Sigmoid colon (tissue), 7 donors: ENCODE measurements at regions of chr7 and their contacts with region 1.

Region 1: GRCh38 chr7:92447345-92448204 is at the start of gene GATAD1:
- DNase-seq: peak; percentile 96
- H3K4me3 ChIP-seq: peak within 1 kb of the TSS; percentile 93 to 97 (median 94)
- H3K27ac ChIP-seq: peak within 1 kb of the TSS; percentile 93 to 99 (median 97)
- H3K4me1 ChIP-seq: peaks cover 0 to 11% (median 8%) of the 10 kb centered on the region in 4 donors
- H3K27me3 ChIP-seq: no peaks in the 10 kb centered on the region
- CTCF ChIP-seq: peak in 3 of 4 experiments; percentile 84 to 96 (median 92)
- EP300 ChIP-seq: no peak
- POLR2A ChIP-seq: peak; percentile 75 to 76
- total RNA-seq, gene GATAD1: 26.5 to 57.1 (median 47.7) TPM

Region 2: DNA sequence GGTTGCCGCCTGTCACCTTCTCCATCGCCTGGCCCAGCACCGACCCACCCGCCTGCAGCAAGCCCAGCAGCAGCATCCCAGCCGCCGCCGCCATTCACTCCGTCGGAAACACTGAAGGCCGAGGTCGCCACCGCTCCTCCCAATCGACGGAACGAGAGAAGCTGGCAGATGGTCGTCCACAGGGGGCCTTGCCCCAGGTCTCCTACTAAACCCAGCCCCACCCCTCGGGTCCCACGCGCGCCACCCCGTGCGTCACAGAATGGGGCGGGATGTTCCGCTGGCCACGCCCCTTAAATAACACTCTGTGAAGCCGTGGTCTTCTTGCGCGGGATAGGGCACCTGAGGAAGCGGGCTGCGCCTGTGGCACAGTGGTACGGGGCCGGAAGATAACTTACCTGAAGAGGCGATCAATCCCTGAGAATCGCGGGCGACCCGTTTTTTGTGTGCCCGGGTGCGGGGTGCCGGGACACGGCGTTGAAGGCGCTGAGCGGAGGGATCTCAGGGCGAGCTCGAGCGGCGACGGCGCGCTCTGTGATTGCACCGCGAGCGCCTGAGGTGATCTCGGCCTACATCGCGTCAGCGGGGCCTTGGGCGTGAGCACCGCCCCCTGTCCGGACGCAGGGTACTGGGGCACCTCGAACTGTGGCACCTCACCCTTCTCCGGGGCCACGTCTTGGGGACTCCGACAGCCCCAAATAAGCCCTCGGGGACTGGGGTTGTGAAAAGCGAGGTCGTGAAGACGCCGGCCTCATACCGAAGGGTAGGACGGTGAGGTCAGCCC is 313.1 kb before region 1 on chr7 and contains the start of gene CYP51A1:
- intact Hi-C with region 1: loop called (anchors 5 kb)
- DNase-seq: peak; percentile 97
- H3K4me3 ChIP-seq: peak within 1 kb of the TSS; percentile 78 to 91 (median 84)
- H3K27ac ChIP-seq: peak within 1 kb of the TSS; percentile 87 to 95 (median 92)
- H3K4me1 ChIP-seq: peaks cover 0 to 21% (median 10%) of the 10 kb centered on the region in 4 donors
- H3K27me3 ChIP-seq: no peaks in the 10 kb centered on the region
- CTCF ChIP-seq: no peak
- EP300 ChIP-seq: peak in 2 of 4 donors; percentile 49 to 63
- POLR2A ChIP-seq: peak; percentile 93
- total RNA-seq, gene CYP51A1: 17.7 to 27.8 (median 25.1) TPM

Region 3: GRCh38 chr7:92178927-92179924 is 268.3 kb before region 1 on chr7 and contains the start of gene LRRD1:
- intact Hi-C with region 1: loop called (anchors 5 kb)
- DNase-seq: peak; percentile 90
- H3K4me3 ChIP-seq: peak within 1 kb of the TSS; percentile 37 to 60 (median 52)
- H3K27ac ChIP-seq: peak within 1 kb of the TSS; percentile 80 to 83 (median 80)
- H3K4me1 ChIP-seq: peaks cover 0 to 8% (median 4%) of the 10 kb centered on the region in 4 donors
- H3K27me3 ChIP-seq: no peaks in the 10 kb centered on the region
- CTCF ChIP-seq: peak; percentile 59 to 98 (median 90)
- EP300 ChIP-seq: no peak
- POLR2A ChIP-seq: no peak
- total RNA-seq, gene LRRD1: under 0.01 to 0.83 TPM in 2 of 4 donors, not detected in the others

Region 4: GRCh38 chr7:92245487-92246362 is 201.8 kb before region 1 on chr7 and contains the starts of genes ANKIB1 and KRIT1:
- intact Hi-C with region 1: loop called (anchors 2 kb)
- DNase-seq: peak; percentile 93
- H3K4me3 ChIP-seq: peak within 1 kb of the TSS; percentile 71 to 99 (median 95)
- H3K27ac ChIP-seq: peak within 1 kb of the TSS; percentile 81 to 95 (median 89)
- H3K4me1 ChIP-seq: peaks cover 0 to 43% (median 27%) of the 10 kb centered on the region in 4 donors
- H3K27me3 ChIP-seq: no peaks in the 10 kb centered on the region
- CTCF ChIP-seq: peak in 2 of 4 experiments; percentile 21 to 24
- EP300 ChIP-seq: no peak
- POLR2A ChIP-seq: peak; percentile 21 to 62
- total RNA-seq, gene ANKIB1: 24.6 to 37.5 (median 33.3) TPM
- total RNA-seq, gene KRIT1: 69.1 to 97.2 (median 75.8) TPM

Region 5: GRCh38 chr7:92423710-92424131 is 23.9 kb before region 1 on chr7:
- intact Hi-C with region 1: loop called (anchors 1 kb)
- DNase-seq: no peak
- H3K4me3 ChIP-seq: peak overlapping the region in 2 of 4 donors; percentile 54
- H3K27ac ChIP-seq: peak overlapping the region in 2 of 4 donors; percentile 58 to 67
- H3K4me1 ChIP-seq: peaks cover 0 to 8% (median 0%) of the 10 kb centered on the region in 4 donors
- H3K27me3 ChIP-seq: peaks cover 0 to 5% (median 0%) of the 10 kb centered on the region in 3 donors
- CTCF ChIP-seq: no peak
- EP300 ChIP-seq: no peak
- POLR2A ChIP-seq: no peak

Region 6: DNA sequence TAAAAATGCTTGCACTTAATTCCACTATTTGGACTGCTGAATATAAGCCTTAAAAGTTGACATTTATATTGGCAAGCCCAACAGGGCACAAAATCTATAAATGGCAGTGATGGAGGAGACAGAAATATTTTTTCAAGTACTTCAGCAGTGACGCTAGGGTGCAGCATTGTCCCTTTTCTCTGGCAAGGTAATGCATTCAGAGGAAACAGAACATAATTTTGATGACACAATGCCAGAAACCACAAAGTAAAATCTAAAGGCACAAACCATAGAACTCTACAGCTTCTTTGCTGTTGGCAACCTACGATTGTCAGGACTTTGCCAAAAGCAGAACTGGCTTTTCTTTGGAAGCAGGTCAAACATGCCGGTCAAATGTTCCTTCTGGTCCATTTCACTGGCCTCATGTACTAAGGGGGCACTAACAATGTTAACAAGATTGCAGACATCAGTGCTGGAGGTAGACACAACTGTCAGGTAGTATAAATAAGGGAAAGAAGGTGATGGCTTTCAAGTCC is 173.5 kb after region 1 on chr7:
- intact Hi-C with region 1: no loop called
- DNase-seq: peak; percentile 73
- H3K4me3 ChIP-seq: no peak overlapping the region
- H3K27ac ChIP-seq: peak overlapping the region; percentile 16 to 58 (median 50)
- H3K4me1 ChIP-seq: peaks cover 0 to 13% (median 10%) of the 10 kb centered on the region in 4 donors
- H3K27me3 ChIP-seq: no peaks in the 10 kb centered on the region
- CTCF ChIP-seq: peak; percentile 55 to 71 (median 63)
- EP300 ChIP-seq: no peak
- POLR2A ChIP-seq: no peak